ENCODE measurements at regions of chr17 and their contacts with region 1.

Region 1: DNA sequence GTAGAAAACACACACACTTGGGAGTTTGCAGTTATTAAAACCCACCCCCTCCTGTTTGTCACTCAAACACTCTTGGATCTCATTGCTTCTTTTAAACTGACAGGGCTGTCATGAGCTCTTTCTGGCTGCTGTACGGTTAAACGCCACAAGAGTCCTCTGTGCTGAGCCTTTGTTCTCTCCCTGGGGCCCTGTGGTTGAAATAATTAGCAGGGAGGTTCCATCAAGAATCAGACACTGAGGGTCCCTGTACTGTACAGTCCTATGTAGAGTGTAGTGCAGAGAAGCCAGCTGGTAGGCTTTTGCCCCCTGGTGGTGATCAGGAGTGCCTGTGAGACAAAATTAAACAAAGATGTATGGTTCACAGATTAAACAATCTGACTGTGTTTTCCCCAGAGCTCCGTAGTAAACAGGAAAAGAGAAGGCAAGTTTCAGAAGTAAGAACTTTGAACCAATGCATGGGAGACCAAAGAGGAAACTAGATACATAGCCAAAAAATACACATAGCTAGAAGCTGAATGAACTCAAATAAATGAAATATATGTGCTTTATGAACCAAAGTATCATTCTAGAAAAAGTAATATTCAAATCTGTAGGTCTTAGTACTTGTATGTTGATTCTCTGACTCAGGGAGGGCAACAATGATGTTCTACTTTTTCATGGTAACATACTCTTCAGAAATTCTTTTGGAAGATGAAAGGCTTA is 1.4 kb upstream of the SSH2 start:
- DNase-seq: peak; percentile 90
- ATAC-seq: peak; percentile 82
- H3K4me3 ChIP-seq: peak overlapping the region; percentile 81 to 98 (median 86)
- H3K27ac ChIP-seq: peak overlapping the region; percentile 76
- H3K4me1 ChIP-seq: peaks cover 47% of the 10 kb centered on the region
- H3K27me3 ChIP-seq: no peaks in the 10 kb centered on the region; a peak in 1 of 5 replicates
- CTCF ChIP-seq: peak; percentile 88
- EP300 ChIP-seq: no peak
- POLR2A ChIP-seq: no peak
- RAD21 ChIP-seq: peak; percentile 81

Region 2: DNA sequence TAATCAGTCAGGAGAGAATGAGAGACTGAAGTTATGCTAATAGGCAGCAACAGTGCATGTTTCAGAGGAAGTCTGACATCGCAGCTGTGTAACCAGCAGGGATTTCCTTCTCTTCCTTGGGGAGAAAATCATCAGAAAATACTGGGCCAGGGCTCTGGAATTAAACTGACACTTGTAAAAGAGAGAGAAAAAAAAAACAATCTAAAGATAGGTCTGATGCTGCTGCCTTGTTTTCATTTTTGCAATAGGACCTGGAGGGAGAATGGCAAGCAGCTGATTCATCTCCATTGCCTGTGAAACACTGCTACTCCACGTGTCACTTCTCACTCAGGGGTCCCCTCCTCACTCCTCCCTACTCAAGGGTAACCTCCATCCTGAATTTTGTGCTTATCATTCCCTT is 291.0 kb before region 1 on chr17:
- CTCF ChIA-PET with region 1: no interaction called
- POLR2A ChIA-PET with region 1: interaction called, 5 read pairs
- in situ Hi-C with region 1: loop called (anchors 10 kb)
- intact Hi-C with region 1: loop called (anchors 1 kb)
- DNase-seq: no peak
- ATAC-seq: no peak
- H3K4me3 ChIP-seq: no peak overlapping the region
- H3K27ac ChIP-seq: no peak overlapping the region
- H3K4me1 ChIP-seq: peaks cover 21% of the 10 kb centered on the region
- H3K27me3 ChIP-seq: no peaks in the 10 kb centered on the region
- CTCF ChIP-seq: no peak
- EP300 ChIP-seq: no peak
- POLR2A ChIP-seq: no peak
- RAD21 ChIP-seq: no peak

Region 3: DNA sequence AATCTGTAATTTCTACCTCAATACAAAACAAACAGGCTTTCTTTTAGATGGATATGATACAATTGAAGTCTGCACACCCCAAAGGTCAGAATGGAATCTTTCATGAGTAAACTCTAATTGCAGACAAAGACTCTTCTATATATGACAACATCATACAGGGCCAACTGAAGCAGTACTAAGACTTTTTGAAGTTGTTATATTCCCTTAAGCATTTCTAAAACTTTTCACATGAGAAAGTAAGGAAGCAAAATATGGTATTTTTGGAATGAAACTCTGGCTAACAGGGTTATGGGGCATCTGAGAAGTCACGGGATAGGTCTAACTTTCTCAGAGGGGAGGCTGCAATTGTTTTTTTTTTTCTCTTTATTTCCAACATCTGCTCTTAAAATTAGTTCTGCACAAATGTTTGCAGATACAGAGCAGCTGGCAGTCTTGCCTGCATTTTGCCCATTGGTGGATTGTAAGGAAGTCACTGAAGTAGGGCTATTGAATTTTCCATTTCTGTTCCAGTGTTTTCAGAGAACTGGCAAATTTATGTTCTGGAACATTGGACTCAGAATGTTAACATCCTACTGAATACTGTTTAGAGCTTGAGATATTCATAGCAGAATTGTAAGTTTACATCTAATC is 60.4 kb before region 1 on chr17:
- CTCF ChIA-PET with region 1: interaction called, 5 read pairs
- POLR2A ChIA-PET with region 1: no interaction called
- in situ Hi-C with region 1: no loop called
- intact Hi-C with region 1: loop called (anchors 1 kb)
- DNase-seq: no peak
- ATAC-seq: no peak
- H3K4me3 ChIP-seq: no peak overlapping the region
- H3K27ac ChIP-seq: no peak overlapping the region
- H3K4me1 ChIP-seq: peaks cover 9% of the 10 kb centered on the region
- H3K27me3 ChIP-seq: no peaks in the 10 kb centered on the region
- CTCF ChIP-seq: no peak
- EP300 ChIP-seq: no peak
- POLR2A ChIP-seq: no peak
- RAD21 ChIP-seq: no peak

Region 4: DNA sequence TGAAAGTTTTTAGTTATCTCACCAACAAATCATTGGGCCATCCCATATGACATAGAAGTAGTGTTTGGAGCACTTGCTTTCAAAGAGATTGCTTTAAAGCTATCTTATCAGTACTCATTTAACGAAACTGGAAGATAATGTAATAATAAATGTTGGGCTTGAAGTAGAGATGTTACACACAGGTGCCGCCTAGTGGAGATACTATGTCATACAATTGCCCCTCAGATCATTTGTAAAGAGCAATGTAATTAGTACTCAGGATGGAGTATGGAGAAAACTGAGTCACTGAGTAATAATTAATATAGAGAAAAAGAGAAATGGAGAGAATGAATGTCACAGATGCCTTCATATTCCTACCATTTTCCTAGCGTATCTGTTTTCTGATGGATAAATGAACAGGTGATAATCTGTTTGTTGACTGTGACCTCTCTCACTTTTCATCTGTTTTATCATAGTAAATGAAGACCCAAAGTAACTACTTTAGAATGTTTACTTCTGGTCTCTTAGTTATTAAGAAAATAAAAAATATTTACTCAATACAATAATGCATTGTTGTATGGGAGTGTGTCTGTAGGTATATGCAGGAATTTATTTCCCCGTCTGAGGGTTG is 90.4 kb after region 1 on chr17:
- CTCF ChIA-PET with region 1: interaction called, 6 read pairs
- POLR2A ChIA-PET with region 1: no interaction called
- in situ Hi-C with region 1: no loop called
- intact Hi-C with region 1: loop called (anchors 1 kb)
- DNase-seq: peak; percentile 34
- ATAC-seq: no peak
- H3K4me3 ChIP-seq: no peak overlapping the region
- H3K27ac ChIP-seq: no peak overlapping the region
- H3K4me1 ChIP-seq: no peaks in the 10 kb centered on the region
- H3K27me3 ChIP-seq: no peaks in the 10 kb centered on the region
- CTCF ChIP-seq: peak; percentile 71
- EP300 ChIP-seq: no peak
- POLR2A ChIP-seq: no peak
- RAD21 ChIP-seq: no peak